ENCODE measurements at regions of chr10 and their contacts with region 1.

Region 1: DNA sequence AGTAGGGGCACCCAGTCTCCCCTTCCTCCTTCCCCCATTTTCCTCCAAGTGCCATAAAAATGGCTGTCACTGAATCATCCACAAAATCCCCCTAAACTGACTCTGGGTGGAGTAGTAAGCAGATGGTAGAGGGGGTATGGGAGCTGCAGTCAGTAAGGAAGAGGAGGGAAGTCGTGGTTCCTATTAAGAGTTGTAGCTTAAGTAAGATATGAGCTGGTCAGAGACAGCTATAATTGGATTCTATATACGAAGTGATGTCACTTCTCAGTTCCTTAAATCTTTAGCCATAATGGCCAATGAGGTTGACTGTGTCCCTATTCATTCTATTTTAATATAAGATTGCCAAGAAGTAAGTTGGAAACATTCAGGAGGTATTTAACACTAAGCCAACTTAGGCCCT is 131.7 kb downstream of the SLC16A9 start:
- DNase-seq: no peak
- H3K4me3 ChIP-seq: no peak overlapping the region
- H3K27ac ChIP-seq: no peak overlapping the region
- H3K4me1 ChIP-seq: peaks cover 0 to 15% of the 10 kb centered on the region in 2 donors
- H3K27me3 ChIP-seq: no peaks in the 10 kb centered on the region
- CTCF ChIP-seq: no peak
- POLR2A ChIP-seq: no peak

Region 2: GRCh38 chr10:59240582-59241183 is 337.3 kb before region 1 on chr10:
- intact Hi-C with region 1: loop called (anchors 10 kb)
- DNase-seq: peak in 1 of 7 donors; percentile 8
- H3K4me3 ChIP-seq: no peak overlapping the region
- H3K27ac ChIP-seq: no peak overlapping the region
- H3K4me1 ChIP-seq: no peaks in the 10 kb centered on the region
- H3K27me3 ChIP-seq: no peaks in the 10 kb centered on the region
- CTCF ChIP-seq: peak; percentile 53 to 86 (median 79)
- POLR2A ChIP-seq: no peak